Naive thymus-derived CD4-positive, alpha-beta T cell (primary cell): ENCODE measurements at regions of chr12 and their contacts with region 1.

Region 1: DNA sequence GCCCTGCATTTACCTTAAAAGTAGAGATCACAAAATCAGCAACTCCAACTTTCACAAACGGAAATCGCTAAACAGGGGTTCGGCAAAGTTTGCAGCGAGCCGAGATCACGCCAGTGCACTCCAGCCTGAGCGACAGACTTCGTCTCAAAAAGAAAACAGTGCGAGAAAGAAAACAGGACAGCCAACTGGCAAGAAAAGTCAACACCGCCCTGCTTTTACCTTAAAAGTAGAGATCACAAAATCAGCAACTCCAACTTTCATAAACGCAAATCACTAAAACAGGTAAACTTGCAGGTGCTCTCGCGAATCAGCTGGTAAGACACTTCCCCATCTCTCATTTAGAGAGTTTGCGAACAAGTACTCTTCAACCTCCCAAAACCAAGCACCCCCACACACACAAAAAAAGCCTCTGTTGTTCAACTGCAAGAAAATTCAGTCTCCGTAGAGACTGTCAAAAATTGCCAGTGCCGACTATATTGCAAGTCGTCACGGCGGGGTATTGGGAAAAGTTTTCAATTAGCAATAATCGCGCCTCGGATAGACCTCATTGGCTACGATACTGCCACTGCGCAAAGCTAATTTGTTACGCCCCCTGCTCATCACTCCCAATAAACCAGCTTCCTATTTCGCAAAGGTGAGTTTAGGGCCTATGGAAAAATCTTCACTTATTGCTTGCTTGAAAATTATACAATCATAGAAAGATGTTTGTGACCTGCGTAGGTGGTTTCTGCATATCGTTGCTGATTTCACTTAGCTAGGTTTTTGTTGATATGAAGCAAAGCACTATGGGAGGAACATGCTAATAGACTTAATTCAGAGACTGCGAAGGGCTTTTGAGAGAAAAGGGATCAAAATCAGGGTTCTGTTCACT is at the start of gene RNU4-1:
- DNase-seq: peak; percentile 51 to 93 (median 89)
- ATAC-seq: peak; percentile 58
- H3K4me3 ChIP-seq: peak within 1 kb of the TSS; percentile 64
- H3K4me3 Mint-ChIP-seq: no peak within 1 kb of the TSS
- H3K27ac ChIP-seq: peak within 1 kb of the TSS; percentile 100
- H3K27ac Mint-ChIP-seq: peak within 1 kb of the TSS in 1 of 9 donors; percentile 62
- H3K4me1 ChIP-seq: no peaks in the 10 kb centered on the region
- H3K4me1 Mint-ChIP-seq: peaks cover 0 to 9% (median 4%) of the 10 kb centered on the region in 7 donors
- H3K27me3 ChIP-seq: no peaks in the 10 kb centered on the region
- H3K27me3 Mint-ChIP-seq: peaks cover 0 to 14% (median 0%) of the 10 kb centered on the region in 5 donors
- total RNA-seq, gene RNU4-1: 319 to 3,107 (median 1,510) TPM

Region 2: GRCh38 chr12:119667577-119668323 is 625.1 kb before region 1 on chr12 and contains the start of gene PRKAB1:
- CTCF ChIA-PET with region 1: no interaction called
- POLR2A ChIA-PET with region 1: no interaction called
- intact Hi-C with region 1: loop called in 1 of 2 experiments (anchors 5 kb)
- DNase-seq: peak; percentile 91 to 96 (median 93)
- ATAC-seq: peak; percentile 96
- H3K4me3 ChIP-seq: peak within 1 kb of the TSS; percentile 81
- H3K4me3 Mint-ChIP-seq: peak within 1 kb of the TSS; percentile 85 to 98 (median 88)
- H3K27ac ChIP-seq: peak within 1 kb of the TSS; percentile 76
- H3K27ac Mint-ChIP-seq: peak within 1 kb of the TSS; percentile 77 to 96 (median 92)
- H3K4me1 ChIP-seq: peaks cover 20 to 30% of the 10 kb centered on the region in 2 donors
- H3K4me1 Mint-ChIP-seq: peaks cover 27 to 63% (median 55%) of the 10 kb centered on the region in 7 donors
- H3K27me3 ChIP-seq: no peaks in the 10 kb centered on the region
- H3K27me3 Mint-ChIP-seq: no peaks in the 10 kb centered on the region
- total RNA-seq, gene PRKAB1: 23.5 to 48.7 (median 43.3) TPM

Region 3: GRCh38 chr12:120116792-120117651 is 175.9 kb before region 1 on chr12:
- CTCF ChIA-PET with region 1: no interaction called
- POLR2A ChIA-PET with region 1: interaction called, 8 read pairs
- intact Hi-C with region 1: loop called (anchors 2 kb)
- DNase-seq: peak; percentile 95 to 100 (median 98)
- ATAC-seq: peak; percentile 91
- H3K4me3 ChIP-seq: peak overlapping the region; percentile 82
- H3K4me3 Mint-ChIP-seq: peak overlapping the region; percentile 78 to 95 (median 90)
- H3K27ac ChIP-seq: peak overlapping the region; percentile 84
- H3K27ac Mint-ChIP-seq: peak overlapping the region; percentile 80 to 97 (median 90)
- H3K4me1 ChIP-seq: peaks cover 46 to 48% of the 10 kb centered on the region in 2 donors
- H3K4me1 Mint-ChIP-seq: peaks cover 64 to 86% (median 80%) of the 10 kb centered on the region in 7 donors
- H3K27me3 ChIP-seq: no peaks in the 10 kb centered on the region
- H3K27me3 Mint-ChIP-seq: no peaks in the 10 kb centered on the region

Region 4: DNA sequence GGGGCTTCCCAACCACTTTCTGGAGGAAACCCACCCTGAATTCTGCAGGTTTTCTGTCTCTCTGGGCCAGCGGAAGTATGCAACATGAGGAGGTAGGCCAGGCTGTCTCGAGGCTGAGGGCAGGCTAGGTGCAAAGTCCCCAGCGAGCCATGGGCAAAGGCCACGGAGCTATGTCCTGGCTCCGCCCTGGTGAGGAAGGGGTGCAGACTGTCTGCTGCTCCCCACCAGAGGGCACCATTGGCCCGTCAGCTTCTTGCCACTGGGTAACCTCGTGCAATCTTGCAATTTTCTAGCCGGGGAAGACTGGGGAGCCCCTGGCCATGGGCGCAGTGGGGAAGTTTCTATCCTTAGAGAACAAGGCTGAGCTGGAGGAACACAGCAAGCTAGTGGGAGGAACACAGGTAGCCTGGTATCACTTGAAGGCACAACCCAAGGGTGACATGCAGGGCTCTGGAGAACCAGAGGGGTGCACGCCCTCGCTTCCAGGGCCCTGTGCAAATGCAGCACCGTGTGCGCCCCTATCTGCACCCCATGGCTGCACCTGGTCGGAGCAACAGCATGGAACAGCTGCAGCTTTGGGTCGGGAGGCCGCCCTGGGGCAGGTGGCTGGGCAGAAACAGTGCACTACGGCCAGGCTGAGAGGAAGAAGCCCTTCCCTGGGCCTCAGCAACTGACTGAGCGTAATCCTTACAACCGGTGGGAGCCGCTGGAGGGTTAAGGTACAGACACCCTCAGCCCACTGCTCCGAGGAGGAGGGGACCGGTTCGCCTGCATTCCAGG is 64.4 kb before region 1 on chr12:
- CTCF ChIA-PET with region 1: interaction called, 7 read pairs
- POLR2A ChIA-PET with region 1: interaction called, 156 read pairs
- intact Hi-C with region 1: loop called (anchors 1 kb)
- DNase-seq: peak; percentile 77 to 90 (median 86)
- ATAC-seq: peak; percentile 86
- H3K4me3 ChIP-seq: peak overlapping the region; percentile 21
- H3K4me3 Mint-ChIP-seq: peak overlapping the region; percentile 72 to 89 (median 78)
- H3K27ac ChIP-seq: peak overlapping the region; percentile 61
- H3K27ac Mint-ChIP-seq: peak overlapping the region in 8 of 9 donors; percentile 74 to 94 (median 87)
- H3K4me1 ChIP-seq: peaks cover 57 to 72% of the 10 kb centered on the region in 2 donors
- H3K4me1 Mint-ChIP-seq: peaks cover 58 to 89% (median 82%) of the 10 kb centered on the region in 7 donors
- H3K27me3 ChIP-seq: no peaks in the 10 kb centered on the region
- H3K27me3 Mint-ChIP-seq: no peaks in the 10 kb centered on the region

Region 5: GRCh38 chr12:120249875-120250795 is 42.8 kb before region 1 on chr12:
- CTCF ChIA-PET with region 1: no interaction called
- POLR2A ChIA-PET with region 1: interaction called, 73 read pairs
- intact Hi-C with region 1: loop called (anchors 1 kb)
- DNase-seq: peak in 1 of 9 donors; percentile 37
- ATAC-seq: no peak
- H3K4me3 ChIP-seq: peak overlapping the region; percentile 46
- H3K4me3 Mint-ChIP-seq: peak overlapping the region; percentile 74 to 86 (median 84)
- H3K27ac ChIP-seq: peak overlapping the region; percentile 55
- H3K27ac Mint-ChIP-seq: peak overlapping the region; percentile 88 to 99 (median 96)
- H3K4me1 ChIP-seq: peaks cover 71 to 82% of the 10 kb centered on the region in 2 donors
- H3K4me1 Mint-ChIP-seq: peaks cover 68 to 92% (median 81%) of the 10 kb centered on the region in 7 donors
- H3K27me3 ChIP-seq: no peaks in the 10 kb centered on the region
- H3K27me3 Mint-ChIP-seq: no peaks in the 10 kb centered on the region

Region 6: DNA sequence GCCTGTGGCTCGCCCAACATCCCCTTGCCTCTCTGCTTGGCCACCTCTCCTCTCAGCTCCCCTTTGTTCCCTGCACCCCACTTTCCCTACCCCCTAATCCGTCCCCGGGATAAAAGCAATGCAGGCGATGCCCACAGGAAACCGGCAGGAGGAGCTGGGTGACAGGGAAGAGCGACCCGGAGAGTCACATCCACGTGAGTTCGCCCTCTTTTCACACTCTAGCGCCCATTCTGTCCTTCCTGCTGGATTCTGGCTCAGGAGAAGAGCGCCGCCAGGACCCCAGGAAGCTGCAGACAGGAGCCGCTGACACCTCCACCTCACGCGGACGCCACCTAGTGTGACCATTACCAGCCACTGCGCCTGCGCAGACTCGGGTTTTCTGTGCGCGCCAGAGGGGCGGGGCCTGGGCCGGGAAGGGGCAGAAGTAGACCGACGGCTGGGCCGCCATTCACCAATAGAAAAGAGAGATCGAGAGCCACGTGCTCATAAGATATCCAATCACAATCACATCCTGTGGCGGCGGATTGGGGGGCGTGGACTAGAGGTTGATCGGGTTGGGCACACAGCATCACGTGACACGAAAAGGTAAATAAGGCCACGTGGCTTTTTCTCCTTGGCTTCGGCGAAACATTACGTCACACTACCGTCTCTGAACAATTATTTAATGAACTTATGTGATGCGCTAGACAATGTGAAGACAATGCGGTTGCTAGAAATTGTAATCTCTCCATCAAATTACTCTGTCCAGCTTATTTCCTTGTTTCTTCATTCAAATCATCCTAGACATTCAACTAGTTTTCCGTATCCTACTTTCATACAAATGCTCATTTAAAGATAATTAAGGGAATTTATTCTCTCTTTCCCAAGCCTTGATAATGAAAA is 24.6 kb after region 1 on chr12:
- CTCF ChIA-PET with region 1: interaction called, 4 read pairs
- POLR2A ChIA-PET with region 1: interaction called, 63 read pairs
- intact Hi-C with region 1: loop called (anchors 1 kb)
- DNase-seq: peak; percentile 100
- ATAC-seq: peak; percentile 100
- H3K4me3 ChIP-seq: peak overlapping the region; percentile 81
- H3K4me3 Mint-ChIP-seq: peak overlapping the region; percentile 86 to 95 (median 93)
- H3K27ac ChIP-seq: peak overlapping the region; percentile 87
- H3K27ac Mint-ChIP-seq: peak overlapping the region; percentile 85 to 99 (median 98)
- H3K4me1 ChIP-seq: peaks cover 5 to 10% of the 10 kb centered on the region in 2 donors
- H3K4me1 Mint-ChIP-seq: peaks cover 4 to 16% (median 14%) of the 10 kb centered on the region in 7 donors
- H3K27me3 ChIP-seq: no peaks in the 10 kb centered on the region
- H3K27me3 Mint-ChIP-seq: peaks cover 0 to 4% (median 0%) of the 10 kb centered on the region in 5 donors

Region 7: DNA sequence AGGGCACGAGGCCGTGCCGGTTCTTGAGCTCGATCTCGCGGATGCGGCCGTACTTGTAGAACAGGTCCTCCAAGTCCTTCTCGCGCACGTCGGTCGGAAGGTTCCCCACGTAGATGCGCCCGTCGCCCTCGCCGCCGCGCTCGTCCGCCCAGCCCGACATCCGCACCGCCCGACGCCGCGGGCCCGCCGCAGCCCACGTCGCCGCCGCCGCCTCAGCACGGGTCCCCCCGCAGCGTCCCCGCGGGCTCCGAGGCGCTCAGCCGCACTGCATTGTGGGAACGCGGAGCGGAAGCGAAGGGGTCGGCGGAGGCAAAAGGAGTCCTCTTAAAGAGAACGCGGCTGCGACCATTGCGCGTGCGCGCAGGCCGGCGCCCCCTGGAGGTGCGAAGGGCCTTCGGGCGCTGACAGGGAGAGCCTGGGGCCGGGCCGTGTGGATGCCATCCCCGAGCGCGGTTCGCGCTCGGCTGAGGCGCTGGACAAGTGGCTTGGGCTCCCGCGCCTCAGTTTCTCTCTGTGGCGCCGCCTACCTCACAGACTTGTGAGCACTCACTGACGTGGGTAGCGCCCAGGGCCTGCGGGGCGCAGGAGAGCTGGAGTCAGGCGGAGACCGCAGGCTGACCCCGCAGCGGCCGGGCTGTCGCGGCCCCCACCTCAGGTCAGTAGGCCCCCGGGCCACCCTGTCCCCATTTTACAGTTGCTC is 176.7 kb after region 1 on chr12 and contains the start of gene SRSF9:
- CTCF ChIA-PET with region 1: interaction called, 8 read pairs
- POLR2A ChIA-PET with region 1: interaction called, 11 read pairs
- intact Hi-C with region 1: no loop called
- DNase-seq: peak; percentile 96 to 100 (median 97)
- ATAC-seq: peak; percentile 95
- H3K4me3 ChIP-seq: peak within 1 kb of the TSS; percentile 78
- H3K4me3 Mint-ChIP-seq: peak within 1 kb of the TSS; percentile 75 to 99 (median 90)
- H3K27ac ChIP-seq: peak within 1 kb of the TSS; percentile 86
- H3K27ac Mint-ChIP-seq: peak within 1 kb of the TSS; percentile 71 to 96 (median 86)
- H3K4me1 ChIP-seq: peaks cover 4 to 31% of the 10 kb centered on the region in 2 donors
- H3K4me1 Mint-ChIP-seq: peaks cover 34 to 65% (median 47%) of the 10 kb centered on the region in 7 donors
- H3K27me3 ChIP-seq: no peaks in the 10 kb centered on the region
- H3K27me3 Mint-ChIP-seq: peaks cover 0 to 2% (median 0%) of the 10 kb centered on the region in 5 donors
- total RNA-seq, gene SRSF9: 136 to 191 (median 145) TPM

Region 8: GRCh38 chr12:120662879-120663278 is 370.0 kb after region 1 on chr12:
- CTCF ChIA-PET with region 1: no interaction called
- POLR2A ChIA-PET with region 1: no interaction called
- intact Hi-C with region 1: no loop called
- DNase-seq: no peak
- ATAC-seq: peak; percentile 26
- H3K4me3 ChIP-seq: no peak overlapping the region
- H3K4me3 Mint-ChIP-seq: no peak overlapping the region
- H3K27ac ChIP-seq: no peak overlapping the region
- H3K27ac Mint-ChIP-seq: no peak overlapping the region
- H3K4me1 ChIP-seq: no peaks in the 10 kb centered on the region
- H3K4me1 Mint-ChIP-seq: no peaks in the 10 kb centered on the region
- H3K27me3 ChIP-seq: no peaks in the 10 kb centered on the region
- H3K27me3 Mint-ChIP-seq: no peaks in the 10 kb centered on the region